ENCODE measurements at regions of chr14 and their contacts with region 1.

Region 1: GRCh38 chr14:30223385-30223813 is 295.8 kb upstream of the PRKD1 start:
- DNase-seq: peak; percentile 97
- H3K4me3 Mint-ChIP-seq: peak overlapping the region; percentile 16
- H3K27ac Mint-ChIP-seq: peak overlapping the region; percentile 95
- H3K4me1 Mint-ChIP-seq: peaks cover 50% of the 10 kb centered on the region
- H3K27me3 Mint-ChIP-seq: no peaks in the 10 kb centered on the region
- CTCF ChIP-seq: no peak

Region 2: GRCh38 chr14:30159374-30159773 is 64.0 kb before region 1 on chr14:
- CTCF ChIA-PET with region 1: no interaction called
- POLR2A ChIA-PET with region 1: no interaction called
- intact Hi-C with region 1: no loop called
- DNase-seq: no peak
- H3K4me3 Mint-ChIP-seq: no peak overlapping the region
- H3K27ac Mint-ChIP-seq: no peak overlapping the region
- H3K4me1 Mint-ChIP-seq: no peaks in the 10 kb centered on the region
- H3K27me3 Mint-ChIP-seq: no peaks in the 10 kb centered on the region
- CTCF ChIP-seq: no peak

Region 3: DNA sequence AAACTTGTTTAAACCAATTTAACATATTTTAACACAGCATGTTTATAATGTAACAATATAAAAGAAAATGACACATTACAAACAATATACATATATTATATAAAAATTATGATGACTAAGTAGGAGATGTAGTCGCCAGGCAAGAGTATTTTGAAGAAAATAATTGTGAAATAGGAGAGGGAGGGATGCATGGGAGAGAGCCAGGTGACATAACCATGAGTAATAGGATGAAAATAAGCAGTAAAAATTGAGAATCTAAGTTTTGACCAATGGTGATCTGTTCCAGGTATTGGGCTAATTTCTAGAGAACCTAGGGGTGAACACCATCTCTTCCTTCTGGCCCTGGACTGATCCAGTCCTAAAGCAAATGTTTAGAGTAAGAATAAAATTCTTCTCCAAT is 20.4 kb after region 1 on chr14:
- CTCF ChIA-PET with region 1: no interaction called
- POLR2A ChIA-PET with region 1: interaction called, 21 read pairs
- intact Hi-C with region 1: no loop called
- DNase-seq: peak; percentile 85
- H3K4me3 Mint-ChIP-seq: peak overlapping the region; percentile 24
- H3K27ac Mint-ChIP-seq: peak overlapping the region; percentile 93
- H3K4me1 Mint-ChIP-seq: peaks cover 16% of the 10 kb centered on the region
- H3K27me3 Mint-ChIP-seq: no peaks in the 10 kb centered on the region
- CTCF ChIP-seq: no peak

Region 4: GRCh38 chr14:30252783-30253674 is 29.6 kb after region 1 on chr14:
- CTCF ChIA-PET with region 1: interaction called, 7 read pairs
- POLR2A ChIA-PET with region 1: interaction called, 24 read pairs
- intact Hi-C with region 1: no loop called
- DNase-seq: peak; percentile 21
- H3K4me3 Mint-ChIP-seq: no peak overlapping the region
- H3K27ac Mint-ChIP-seq: peak overlapping the region; percentile 84
- H3K4me1 Mint-ChIP-seq: peaks cover 26% of the 10 kb centered on the region
- H3K27me3 Mint-ChIP-seq: no peaks in the 10 kb centered on the region
- CTCF ChIP-seq: no peak

Region 5: GRCh38 chr14:30260833-30261607 is 37.6 kb after region 1 on chr14:
- CTCF ChIA-PET with region 1: interaction called, 7 read pairs
- POLR2A ChIA-PET with region 1: interaction called, 24 read pairs
- intact Hi-C with region 1: no loop called
- DNase-seq: no peak
- H3K4me3 Mint-ChIP-seq: no peak overlapping the region
- H3K27ac Mint-ChIP-seq: no peak overlapping the region
- H3K4me1 Mint-ChIP-seq: peaks cover 20% of the 10 kb centered on the region
- H3K27me3 Mint-ChIP-seq: no peaks in the 10 kb centered on the region
- CTCF ChIP-seq: no peak

Region 6: GRCh38 chr14:30291216-30291615 is 67.8 kb after region 1 on chr14:
- CTCF ChIA-PET with region 1: interaction called, 11 read pairs
- POLR2A ChIA-PET with region 1: interaction called, 3 read pairs
- intact Hi-C with region 1: no loop called
- DNase-seq: peak; percentile 62
- H3K4me3 Mint-ChIP-seq: no peak overlapping the region
- H3K27ac Mint-ChIP-seq: no peak overlapping the region
- H3K4me1 Mint-ChIP-seq: peaks cover 5% of the 10 kb centered on the region
- H3K27me3 Mint-ChIP-seq: no peaks in the 10 kb centered on the region
- CTCF ChIP-seq: no peak

Region 7: DNA sequence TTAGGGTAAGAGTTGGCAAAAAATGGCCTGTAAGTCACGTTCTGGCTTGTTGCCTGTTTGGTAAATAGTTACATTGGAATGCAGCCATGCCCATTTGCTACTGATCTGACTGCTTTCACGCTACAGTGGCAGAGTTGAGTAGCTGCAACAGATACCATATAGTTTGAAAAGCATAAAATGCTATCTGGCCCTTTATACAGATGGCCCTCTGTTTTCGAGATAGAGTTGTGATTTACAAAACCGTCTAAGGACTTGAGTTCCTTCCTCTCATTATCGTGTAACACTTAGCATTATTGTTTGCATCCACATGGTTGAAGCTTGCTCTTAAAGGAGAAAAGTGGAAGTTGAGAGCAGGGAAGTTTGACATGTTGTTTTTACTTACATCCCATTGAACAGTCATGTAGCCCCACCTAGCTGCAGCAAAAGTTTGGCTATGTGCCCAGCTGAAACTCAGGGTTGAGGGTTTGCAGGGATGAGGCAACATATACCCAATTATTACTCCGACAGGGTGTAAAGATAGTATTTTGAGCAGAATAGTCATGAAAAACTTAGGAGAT is 387.5 kb after region 1 on chr14:
- CTCF ChIA-PET with region 1: no interaction called
- POLR2A ChIA-PET with region 1: no interaction called
- intact Hi-C with region 1: loop called (anchors 5 kb)
- DNase-seq: peak; percentile 89
- H3K4me3 Mint-ChIP-seq: peak overlapping the region; percentile 69
- H3K27ac Mint-ChIP-seq: peak overlapping the region; percentile 69
- H3K4me1 Mint-ChIP-seq: peaks cover 30% of the 10 kb centered on the region
- H3K27me3 Mint-ChIP-seq: no peaks in the 10 kb centered on the region
- CTCF ChIP-seq: peak; percentile 18

Measured in MCF 10A (cell line).